Ascending aorta (tissue), 2 donors: ENCODE measurements at regions of chr20 and their contacts with region 1.

Region 1: DNA sequence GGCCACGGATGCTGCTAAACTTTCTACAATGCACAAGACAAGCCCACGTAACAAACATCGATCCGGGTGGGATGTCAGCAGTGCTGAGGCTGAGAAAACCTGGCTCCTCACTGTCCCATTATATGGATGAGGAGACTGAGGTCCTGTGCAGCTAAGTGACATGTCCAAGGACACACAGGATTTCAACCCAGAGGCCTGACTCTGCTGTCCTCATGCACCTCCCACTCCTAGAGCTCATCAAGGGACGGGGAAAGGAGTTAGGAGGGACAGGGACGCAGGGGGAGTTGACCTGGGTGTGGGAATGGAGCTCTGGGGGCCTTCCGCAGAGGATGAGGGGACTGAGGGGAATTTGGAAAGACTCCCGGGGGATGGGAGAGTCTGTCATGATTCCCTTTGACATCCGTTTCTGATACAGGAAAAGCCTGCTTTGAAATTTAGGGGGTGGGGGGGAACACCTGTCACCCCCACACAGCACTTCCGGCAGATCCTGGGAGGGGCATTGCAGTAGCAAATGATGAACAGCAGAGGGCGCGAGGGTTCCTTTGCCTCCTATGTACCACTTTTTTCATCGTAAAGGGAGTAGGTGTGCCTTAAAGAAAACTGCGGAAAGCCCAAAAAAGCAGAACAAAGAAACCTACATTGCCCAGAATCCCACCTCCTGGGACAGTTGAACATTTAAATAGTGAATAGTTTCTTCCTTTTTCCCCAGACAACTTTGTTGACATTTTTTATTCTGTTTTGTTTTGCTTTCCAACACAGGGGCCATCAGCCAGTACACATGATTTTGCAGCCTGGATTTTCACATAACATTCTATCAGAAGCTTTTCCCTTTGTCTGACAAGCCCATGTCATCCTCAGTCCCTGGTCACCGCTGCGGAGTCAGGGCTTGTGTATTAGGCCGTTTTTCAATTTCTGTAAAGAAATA is 48.6 kb downstream of the SLC2A10 start:
- DNase-seq: no peak
- H3K4me3 ChIP-seq: no peak overlapping the region
- H3K27ac ChIP-seq: no peak overlapping the region
- H3K4me1 ChIP-seq: no peaks in the 10 kb centered on the region
- H3K27me3 ChIP-seq: no peaks in the 10 kb centered on the region
- CTCF ChIP-seq: peak; percentile 81 to 93 (median 91)

Region 2: GRCh38 chr20:46772901-46773300 is 14.9 kb after region 1 on chr20:
- intact Hi-C with region 1: no loop called
- DNase-seq: no peak
- H3K4me3 ChIP-seq: no peak overlapping the region
- H3K27ac ChIP-seq: no peak overlapping the region
- H3K4me1 ChIP-seq: no peaks in the 10 kb centered on the region
- H3K27me3 ChIP-seq: no peaks in the 10 kb centered on the region
- CTCF ChIP-seq: no peak

Region 3: DNA sequence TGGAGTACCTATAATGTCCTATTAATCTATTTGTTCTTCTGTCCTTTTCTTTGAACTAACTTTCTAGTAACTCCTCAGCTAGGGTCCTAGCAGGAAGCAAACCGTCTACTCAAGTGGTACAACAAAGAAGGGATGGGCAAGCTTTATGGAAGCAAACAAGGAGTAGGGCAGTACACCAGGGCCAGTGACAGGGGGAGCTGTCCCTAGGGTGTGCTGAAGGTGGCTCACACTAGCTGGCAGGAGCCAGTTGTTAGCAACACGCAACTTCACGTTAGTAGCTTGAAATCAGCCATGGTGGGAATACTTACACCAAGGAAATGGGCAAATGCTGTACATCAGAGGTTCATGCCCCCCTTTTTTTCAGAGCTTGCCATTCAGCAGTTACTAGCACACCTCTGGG is 62.7 kb after region 1 on chr20:
- intact Hi-C with region 1: no loop called
- DNase-seq: no peak
- H3K4me3 ChIP-seq: no peak overlapping the region
- H3K27ac ChIP-seq: no peak overlapping the region
- H3K4me1 ChIP-seq: no peaks in the 10 kb centered on the region
- H3K27me3 ChIP-seq: no peaks in the 10 kb centered on the region
- CTCF ChIP-seq: no peak

Region 4: DNA sequence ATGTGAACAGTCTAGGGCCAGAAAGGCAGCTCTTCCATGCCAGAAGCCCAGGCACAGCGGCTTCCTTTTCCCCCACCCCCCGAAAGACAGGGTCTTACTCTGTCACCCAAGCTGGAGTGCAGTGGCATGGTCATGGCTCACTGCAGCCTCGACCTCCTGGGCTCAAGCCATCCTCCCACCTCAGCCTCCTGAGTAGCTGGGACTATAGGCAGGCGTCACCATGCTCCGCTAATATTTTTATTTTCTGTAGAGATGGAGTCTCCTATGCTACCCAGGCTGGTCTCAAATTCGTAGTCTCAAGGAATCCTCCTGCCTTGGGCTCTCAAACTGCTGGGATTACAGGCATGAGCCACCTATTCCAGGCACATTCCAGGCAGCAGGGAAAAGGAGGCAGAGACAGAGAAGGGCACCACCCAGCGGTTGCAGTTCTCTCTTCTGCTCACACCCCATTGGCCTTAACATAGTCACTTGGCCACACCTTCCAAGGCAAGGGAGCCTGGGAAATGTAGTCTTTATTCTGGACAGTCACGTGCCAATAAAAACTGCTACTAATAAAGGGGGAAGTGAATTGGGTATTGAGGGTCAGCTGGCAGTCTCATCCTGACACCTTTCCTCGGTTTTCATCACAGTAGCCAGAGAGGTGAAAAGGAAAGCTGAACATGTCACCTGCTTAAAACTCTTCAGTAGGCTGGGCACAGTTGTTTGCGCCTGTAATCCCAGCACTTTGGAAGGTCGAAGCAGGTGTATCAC is 392.6 kb after region 1 on chr20:
- intact Hi-C with region 1: loop called (anchors 2 kb)
- DNase-seq: peak; percentile 33 to 79
- H3K4me3 ChIP-seq: no peak overlapping the region
- H3K27ac ChIP-seq: no peak overlapping the region
- H3K4me1 ChIP-seq: no peaks in the 10 kb centered on the region
- H3K27me3 ChIP-seq: no peaks in the 10 kb centered on the region
- CTCF ChIP-seq: peak; percentile 42 to 62 (median 60)

Region 5: DNA sequence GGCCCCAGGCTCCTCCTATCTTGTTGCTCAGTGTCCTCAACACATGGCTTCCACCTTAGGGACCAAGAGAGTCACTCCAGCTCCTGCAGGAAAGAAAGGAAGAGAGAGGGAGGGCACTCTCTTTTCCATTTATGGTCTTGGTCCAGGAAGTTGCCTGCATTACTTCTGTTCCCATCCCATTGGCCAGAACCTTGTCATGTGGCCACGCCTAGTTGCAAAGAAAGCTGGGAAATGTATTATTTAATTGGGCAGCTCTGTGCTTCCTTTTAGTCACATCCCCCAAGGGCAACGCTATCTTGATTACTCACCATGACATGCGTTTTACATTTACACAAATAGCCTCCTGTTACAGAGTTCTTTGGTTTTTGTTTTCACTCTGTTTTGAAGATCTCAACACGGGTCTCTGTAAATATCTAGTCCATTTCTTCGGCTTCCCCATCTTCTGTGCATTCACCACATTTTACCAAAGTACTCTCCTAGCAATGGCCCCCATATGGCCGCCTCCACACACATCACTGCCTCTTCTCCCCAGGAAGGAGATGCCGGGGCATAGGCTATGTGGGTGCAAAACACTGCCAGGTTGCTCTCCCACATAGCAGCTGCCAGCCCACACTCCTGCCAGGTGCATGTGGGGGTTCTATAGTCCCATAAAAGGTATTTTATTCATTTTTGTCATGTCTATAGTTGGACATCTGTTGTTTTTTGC is 634.2 kb after region 1 on chr20:
- intact Hi-C with region 1: loop called (anchors 10 kb)
- DNase-seq: peak in 1 of 2 donors; percentile 72
- H3K4me3 ChIP-seq: no peak overlapping the region
- H3K27ac ChIP-seq: peak overlapping the region; percentile 39 to 59
- H3K4me1 ChIP-seq: peaks cover 0 to 3% of the 10 kb centered on the region in 2 donors
- H3K27me3 ChIP-seq: no peaks in the 10 kb centered on the region
- CTCF ChIP-seq: no peak